ENCODE measurements at regions of chr20 and their contacts with region 1.

Region 1: GRCh38 chr20:44187051-44187762 is at the start of gene JPH2:
- DNase-seq: peak in 1 of 2 experiments; percentile 77
- H3K4me3 ChIP-seq: peak within 1 kb of the TSS; percentile 27 to 66 (median 46)
- H3K27ac ChIP-seq: no peak within 1 kb of the TSS
- H3K4me1 ChIP-seq: peaks cover 0 to 13% (median 6%) of the 10 kb centered on the region in 4 experiments; a peak in 5 of 7 replicates
- H3K27me3 ChIP-seq: peaks cover 0 to 4% (median 1%) of the 10 kb centered on the region in 4 experiments; a peak in 2 of 7 replicates
- CTCF ChIP-seq: no peak
- EP300 ChIP-seq: no peak
- POLR2A ChIP-seq: no peak; a peak in 1 of 3 replicates
- RAD21 ChIP-seq: no peak
- total RNA-seq, gene JPH2: 1.3 and 1.5 TPM in 2 replicates

Region 2: DNA sequence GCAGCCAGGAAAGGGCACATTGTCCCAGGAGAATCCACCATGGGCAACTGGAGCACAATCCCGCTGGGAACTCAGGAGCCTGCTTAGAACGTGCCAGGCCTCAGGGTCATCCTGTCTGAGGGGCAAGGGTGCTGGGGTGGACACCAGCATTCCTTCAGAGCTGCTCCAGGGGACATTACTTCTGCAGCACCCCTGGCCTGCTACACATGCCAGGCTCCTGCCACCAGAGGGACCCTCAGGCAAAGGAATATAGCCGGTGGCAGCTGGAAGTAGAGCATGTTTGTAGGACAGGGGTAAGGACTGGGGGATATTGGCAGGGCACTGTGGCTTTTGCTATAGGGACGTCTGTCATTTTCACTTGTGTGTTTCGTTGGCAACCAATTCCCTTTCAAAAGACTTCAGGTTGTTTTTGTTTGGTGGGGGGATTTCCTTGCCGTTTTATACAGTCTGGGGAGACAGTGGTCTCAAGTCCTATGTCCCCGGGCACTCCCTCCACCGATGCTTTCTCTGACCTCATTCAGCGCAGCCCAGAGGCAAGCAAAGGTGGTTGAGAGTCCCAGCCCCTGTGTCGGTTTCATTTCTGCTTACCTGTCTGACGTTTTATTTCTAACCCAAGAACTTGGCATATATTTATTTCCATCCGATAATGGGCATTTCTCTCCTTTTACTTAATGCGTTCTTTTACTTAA is 131.1 kb before region 1 on chr20:
- CTCF ChIA-PET with region 1: interaction called, 10 read pairs
- POLR2A ChIA-PET with region 1: no interaction called
- DNase-seq: peak; percentile 29 to 69
- H3K4me3 ChIP-seq: no peak overlapping the region
- H3K27ac ChIP-seq: no peak overlapping the region
- H3K4me1 ChIP-seq: no peaks in the 10 kb centered on the region
- H3K27me3 ChIP-seq: no peaks in the 10 kb centered on the region
- CTCF ChIP-seq: peak; percentile 82 to 91 (median 84)
- EP300 ChIP-seq: no peak
- POLR2A ChIP-seq: no peak
- RAD21 ChIP-seq: peak; percentile 91 to 96

Region 3: DNA sequence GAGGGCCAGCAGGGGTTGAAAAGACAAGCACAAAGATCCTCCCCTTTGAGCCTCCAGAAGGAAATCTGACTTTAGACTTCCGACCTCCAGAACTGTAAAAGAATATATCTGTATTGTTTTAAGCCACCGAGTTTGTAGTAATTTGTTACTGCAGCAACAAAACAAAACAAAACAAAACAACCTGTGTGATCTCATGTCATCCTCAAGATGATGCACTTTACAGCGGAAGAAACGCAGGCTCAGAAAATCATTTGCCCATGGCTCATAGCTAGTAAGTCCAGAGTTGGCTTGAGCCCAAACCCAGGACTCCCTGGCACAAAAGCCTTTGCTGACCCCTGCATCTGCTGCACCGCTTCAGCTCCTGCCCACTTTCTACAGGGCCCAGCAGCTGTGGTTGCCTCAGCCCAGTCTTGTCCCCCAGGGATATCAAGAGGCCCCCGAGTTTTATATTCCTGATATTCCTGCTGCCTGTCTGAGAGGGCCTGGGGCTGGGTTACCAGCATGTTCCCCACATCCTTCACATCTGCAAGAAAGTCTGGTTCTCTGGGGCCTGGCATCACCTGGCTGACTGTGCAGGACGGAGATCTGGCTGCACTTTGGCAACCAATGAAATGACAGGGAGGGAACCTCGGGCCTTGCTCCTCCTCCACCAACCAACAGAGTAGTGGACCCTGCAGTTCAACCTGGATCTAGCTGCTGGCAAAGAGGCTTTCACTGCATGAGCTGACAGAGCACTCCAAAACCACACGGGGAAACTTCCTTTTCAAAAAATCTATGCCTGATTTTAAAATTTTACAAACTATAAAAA is 57.1 kb before region 1 on chr20:
- CTCF ChIA-PET with region 1: interaction called, 23 read pairs
- POLR2A ChIA-PET with region 1: interaction called, 3 read pairs
- DNase-seq: no peak
- H3K4me3 ChIP-seq: no peak overlapping the region
- H3K27ac ChIP-seq: no peak overlapping the region
- H3K4me1 ChIP-seq: no peaks in the 10 kb centered on the region
- H3K27me3 ChIP-seq: no peaks in the 10 kb centered on the region
- CTCF ChIP-seq: no peak
- EP300 ChIP-seq: no peak
- POLR2A ChIP-seq: no peak
- RAD21 ChIP-seq: no peak

Region 4: GRCh38 chr20:44142413-44142812 is 44.8 kb before region 1 on chr20:
- CTCF ChIA-PET with region 1: interaction called, 45 read pairs
- POLR2A ChIA-PET with region 1: interaction called, 5 read pairs
- DNase-seq: no peak
- H3K4me3 ChIP-seq: no peak overlapping the region
- H3K27ac ChIP-seq: no peak overlapping the region
- H3K4me1 ChIP-seq: peaks cover 0 to 4% (median under 1%) of the 10 kb centered on the region in 4 experiments; a peak in 3 of 7 replicates
- H3K27me3 ChIP-seq: no peaks in the 10 kb centered on the region
- CTCF ChIP-seq: no peak
- EP300 ChIP-seq: no peak
- POLR2A ChIP-seq: no peak
- RAD21 ChIP-seq: no peak

Region 5: DNA sequence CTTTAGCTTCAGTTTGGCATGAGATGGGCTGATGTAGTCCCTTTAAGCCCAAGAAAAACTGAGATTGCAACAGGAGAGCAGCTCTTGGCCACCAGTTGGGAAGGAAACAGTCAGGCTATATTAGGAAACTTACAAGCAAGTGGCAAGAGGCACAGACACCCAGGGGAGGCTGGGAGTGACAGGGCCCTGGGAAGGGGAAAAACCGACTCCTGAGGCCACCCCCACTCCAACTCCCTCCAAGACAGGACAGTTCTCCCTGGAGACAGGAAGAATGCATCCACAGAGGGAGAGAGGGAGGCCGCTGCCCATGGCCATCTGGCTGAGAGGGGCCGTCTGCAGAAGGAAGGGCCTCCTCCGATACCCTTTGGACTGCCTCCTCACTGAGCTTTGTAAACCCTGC is 20.7 kb before region 1 on chr20:
- CTCF ChIA-PET with region 1: interaction called, 22 read pairs
- POLR2A ChIA-PET with region 1: interaction called, 4 read pairs
- DNase-seq: no peak
- H3K4me3 ChIP-seq: no peak overlapping the region
- H3K27ac ChIP-seq: no peak overlapping the region
- H3K4me1 ChIP-seq: no peaks in the 10 kb centered on the region
- H3K27me3 ChIP-seq: no peaks in the 10 kb centered on the region
- CTCF ChIP-seq: no peak
- EP300 ChIP-seq: no peak
- POLR2A ChIP-seq: no peak
- RAD21 ChIP-seq: no peak

Region 6: GRCh38 chr20:44231713-44232468 is 44.7 kb after region 1 on chr20:
- CTCF ChIA-PET with region 1: no interaction called
- POLR2A ChIA-PET with region 1: no interaction called
- DNase-seq: no peak
- H3K4me3 ChIP-seq: no peak overlapping the region
- H3K27ac ChIP-seq: no peak overlapping the region
- H3K4me1 ChIP-seq: peaks cover 0 to 6% (median 0%) of the 10 kb centered on the region in 4 experiments; a peak in 4 of 7 replicates
- H3K27me3 ChIP-seq: no peaks in the 10 kb centered on the region
- CTCF ChIP-seq: no peak
- EP300 ChIP-seq: no peak
- POLR2A ChIP-seq: no peak
- RAD21 ChIP-seq: no peak